ENCODE measurements at regions of chrX and their contacts with region 1.

Region 1: DNA sequence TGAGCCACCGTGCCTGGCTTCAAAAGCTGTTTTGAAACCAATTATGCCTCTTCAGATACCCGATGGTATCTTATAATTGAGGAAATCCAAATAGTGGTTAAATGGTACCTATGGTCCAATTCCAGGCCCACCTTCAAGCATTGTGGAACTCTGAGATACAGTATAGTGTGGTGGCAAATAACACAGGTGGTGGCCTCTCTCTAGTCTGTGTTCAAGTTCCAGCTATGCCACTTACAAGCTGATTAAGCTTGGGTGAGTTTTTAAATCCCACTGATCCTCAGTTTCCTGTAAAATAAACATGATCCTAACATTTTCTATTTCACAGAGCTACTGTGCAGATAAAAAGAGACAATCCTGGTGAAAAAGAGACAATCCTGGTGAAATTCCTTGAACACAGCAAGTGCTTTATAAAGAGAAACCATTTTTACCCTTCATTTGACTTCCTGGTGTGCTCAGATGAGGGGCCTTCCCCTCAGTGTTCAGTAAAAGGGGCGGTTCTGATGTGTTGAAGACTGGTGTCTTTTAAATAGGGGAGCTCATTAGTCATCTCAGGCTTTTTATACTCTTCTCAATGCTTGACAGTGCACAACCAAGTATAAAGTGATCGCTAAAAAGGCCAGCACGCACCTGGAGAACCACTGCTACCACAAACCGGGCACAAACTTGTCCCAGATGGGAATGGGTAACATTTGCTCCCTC is 30.8 kb upstream of the CD40LG start:
- DNase-seq: peak in 4 of 5 donors; percentile 42 to 69 (median 48)
- H3K4me3 ChIP-seq: peak overlapping the region in 1 of 2 donors; percentile 18
- H3K4me3 Mint-ChIP-seq: peak overlapping the region; percentile 27 to 81 (median 68)
- H3K27ac ChIP-seq: peak overlapping the region; percentile 57
- H3K27ac Mint-ChIP-seq: peak overlapping the region; percentile 79 to 93 (median 87)
- H3K4me1 ChIP-seq: peaks cover 67% of the 10 kb centered on the region
- H3K4me1 Mint-ChIP-seq: peaks cover 36 to 70% (median 46%) of the 10 kb centered on the region in 4 donors
- H3K27me3 ChIP-seq: no peaks in the 10 kb centered on the region
- H3K27me3 Mint-ChIP-seq: no peaks in the 10 kb centered on the region

Region 2: DNA sequence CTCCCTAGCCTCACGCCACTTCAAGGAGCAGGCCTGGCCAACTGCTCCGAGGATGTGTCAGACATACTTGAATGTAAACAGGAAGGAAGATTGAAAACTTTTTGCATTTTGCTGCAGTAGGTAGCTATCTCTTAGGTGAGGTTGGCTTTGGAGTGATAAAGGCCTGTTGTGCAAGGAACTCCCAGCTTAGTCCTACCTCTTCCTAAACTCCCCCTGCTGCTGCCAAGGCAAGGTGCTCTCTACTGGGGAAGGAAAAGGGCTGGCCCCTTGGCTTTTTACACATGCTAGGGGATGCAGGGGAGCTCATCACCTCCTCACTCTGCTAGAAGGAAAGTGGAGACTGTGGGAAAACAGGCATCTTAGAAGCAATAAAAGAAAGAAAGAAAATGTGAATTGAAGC is 140.1 kb before region 1 on chrX:
- CTCF ChIA-PET with region 1: no interaction called
- POLR2A ChIA-PET with region 1: no interaction called
- intact Hi-C with region 1: no loop called
- DNase-seq: peak in 1 of 5 donors; percentile 2
- H3K4me3 ChIP-seq: no peak overlapping the region
- H3K4me3 Mint-ChIP-seq: no peak overlapping the region
- H3K27ac ChIP-seq: no peak overlapping the region
- H3K27ac Mint-ChIP-seq: no peak overlapping the region
- H3K4me1 ChIP-seq: no peaks in the 10 kb centered on the region
- H3K4me1 Mint-ChIP-seq: no peaks in the 10 kb centered on the region
- H3K27me3 ChIP-seq: no peaks in the 10 kb centered on the region
- H3K27me3 Mint-ChIP-seq: peaks cover 0 to 2% of the 10 kb centered on the region in 2 donors

Region 3: DNA sequence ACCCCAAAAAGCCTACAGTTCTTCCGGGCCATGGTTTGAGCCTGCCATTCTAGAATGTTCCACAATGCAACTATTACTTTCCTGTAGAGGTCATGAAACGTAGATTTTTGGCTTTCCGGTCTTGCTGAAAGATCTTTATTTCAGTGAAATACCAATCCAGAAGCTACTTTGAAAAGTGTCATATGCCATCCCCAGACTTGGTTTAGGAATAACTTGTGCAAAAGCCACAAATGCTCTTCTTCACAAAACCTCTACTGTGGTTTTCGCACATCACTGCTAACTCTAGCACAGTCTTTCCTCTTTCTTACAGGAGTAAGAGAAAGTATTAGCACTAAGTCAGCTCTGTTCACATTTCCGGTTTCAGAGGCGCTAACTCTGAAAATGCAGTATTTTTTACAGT is 18.1 kb after region 1 on chrX:
- CTCF ChIA-PET with region 1: interaction called, 12 read pairs
- POLR2A ChIA-PET with region 1: interaction called, 74 read pairs
- intact Hi-C with region 1: loop called (anchors 1 kb)
- DNase-seq: peak; percentile 56 to 68 (median 62)
- H3K4me3 ChIP-seq: peak overlapping the region in 1 of 2 donors; percentile 47
- H3K4me3 Mint-ChIP-seq: peak overlapping the region; percentile 51 to 88 (median 82)
- H3K27ac ChIP-seq: peak overlapping the region; percentile 56
- H3K27ac Mint-ChIP-seq: peak overlapping the region; percentile 78 to 96 (median 94)
- H3K4me1 ChIP-seq: peaks cover 97% of the 10 kb centered on the region
- H3K4me1 Mint-ChIP-seq: peaks cover 52 to 94% (median 73%) of the 10 kb centered on the region in 4 donors
- H3K27me3 ChIP-seq: no peaks in the 10 kb centered on the region
- H3K27me3 Mint-ChIP-seq: no peaks in the 10 kb centered on the region

Region 4: DNA sequence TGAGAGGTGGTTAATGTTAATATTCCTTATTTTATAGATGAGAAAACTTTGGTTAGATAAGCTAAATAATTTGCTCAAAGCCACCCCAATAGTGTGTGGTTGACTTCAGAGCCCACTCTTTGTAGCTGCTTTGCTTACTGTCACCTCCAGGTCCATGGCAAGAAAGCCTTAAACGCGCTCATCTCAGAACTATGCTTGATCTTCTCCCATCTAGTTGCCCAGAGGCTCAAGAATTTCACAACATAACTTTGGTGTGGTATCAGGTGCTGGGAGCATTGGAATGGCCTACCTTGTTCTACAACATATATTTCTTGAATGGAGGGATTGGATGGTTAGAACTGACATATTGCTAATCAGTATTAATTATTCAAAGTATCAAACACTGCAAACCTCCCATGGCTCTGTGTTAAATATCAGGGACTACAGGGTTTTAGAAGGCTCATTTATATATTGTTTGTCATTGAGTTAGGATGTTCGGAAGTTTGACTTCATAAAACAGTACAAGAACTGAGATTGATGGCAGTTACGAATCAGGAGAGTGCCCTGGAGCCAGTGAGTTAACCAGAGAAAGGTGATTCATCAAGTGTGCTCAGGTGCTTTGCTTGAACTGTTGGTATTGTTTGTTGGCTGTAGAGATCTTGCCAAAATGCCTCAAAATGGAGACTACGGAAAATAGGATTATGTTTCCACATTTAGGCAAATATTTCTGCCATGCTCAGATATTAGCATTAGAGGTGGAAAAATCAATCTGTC is 424.0 kb after region 1 on chrX:
- CTCF ChIA-PET with region 1: no interaction called
- POLR2A ChIA-PET with region 1: no interaction called
- intact Hi-C with region 1: no loop called
- DNase-seq: no peak
- H3K4me3 ChIP-seq: no peak overlapping the region
- H3K4me3 Mint-ChIP-seq: no peak overlapping the region
- H3K27ac ChIP-seq: no peak overlapping the region
- H3K27ac Mint-ChIP-seq: no peak overlapping the region
- H3K4me1 ChIP-seq: no peaks in the 10 kb centered on the region
- H3K4me1 Mint-ChIP-seq: no peaks in the 10 kb centered on the region
- H3K27me3 ChIP-seq: no peaks in the 10 kb centered on the region
- H3K27me3 Mint-ChIP-seq: peaks cover 0 to 2% of the 10 kb centered on the region in 2 donors